Psoas muscle (tissue), 8 donors: ENCODE measurements at regions of chr10 and their contacts with region 1.

Region 1: DNA sequence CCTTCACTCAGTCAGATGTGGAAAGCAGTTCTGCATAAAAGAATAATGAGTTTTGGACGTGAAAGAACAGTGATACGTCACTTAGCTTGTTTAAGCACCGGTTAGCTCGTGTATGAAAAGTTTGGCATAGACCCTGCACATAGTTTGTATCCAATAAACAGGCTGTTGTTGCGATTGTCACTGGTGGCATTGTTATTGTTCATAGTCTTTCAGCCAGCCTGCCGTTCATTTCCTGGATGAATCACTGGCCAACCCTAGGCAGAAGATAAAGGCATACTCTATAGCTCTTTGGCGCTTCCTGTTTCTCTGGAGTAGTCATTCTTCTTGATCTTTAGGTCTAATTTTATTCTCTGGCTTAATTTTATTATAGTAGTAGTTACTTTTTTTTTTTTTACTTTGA is 57.8 kb upstream of the ANKRD30A start:
- DNase-seq: no peak
- ATAC-seq: no peak
- H3K4me3 ChIP-seq: no peak overlapping the region
- H3K27ac ChIP-seq: no peak overlapping the region
- H3K4me1 ChIP-seq: no peaks in the 10 kb centered on the region
- H3K27me3 ChIP-seq: no peaks in the 10 kb centered on the region
- CTCF ChIP-seq: no peak

Region 2: DNA sequence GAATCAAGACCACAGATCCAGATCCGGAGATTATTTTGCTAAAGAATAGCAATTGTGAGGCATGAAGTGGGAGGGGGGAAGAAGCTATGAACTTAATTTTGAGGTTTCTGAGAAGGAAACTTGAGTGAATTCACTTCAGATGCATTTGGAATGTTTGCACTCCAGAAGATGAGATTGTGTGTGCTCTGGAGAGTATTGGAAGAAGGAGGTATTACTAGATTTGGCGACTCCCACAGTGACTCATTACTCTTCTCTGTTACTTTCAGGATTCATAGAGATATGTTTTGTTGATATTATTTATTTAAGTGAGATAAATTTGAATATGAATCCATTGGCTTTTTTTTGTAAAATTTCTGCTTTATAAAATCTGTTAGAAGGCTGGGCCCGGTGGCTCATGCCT is 138.6 kb after region 1 on chr10:
- intact Hi-C with region 1: no loop called
- DNase-seq: no peak
- ATAC-seq: no peak
- H3K4me3 ChIP-seq: no peak overlapping the region
- H3K27ac ChIP-seq: no peak overlapping the region
- H3K4me1 ChIP-seq: no peaks in the 10 kb centered on the region
- H3K27me3 ChIP-seq: no peaks in the 10 kb centered on the region
- CTCF ChIP-seq: no peak

Region 3: DNA sequence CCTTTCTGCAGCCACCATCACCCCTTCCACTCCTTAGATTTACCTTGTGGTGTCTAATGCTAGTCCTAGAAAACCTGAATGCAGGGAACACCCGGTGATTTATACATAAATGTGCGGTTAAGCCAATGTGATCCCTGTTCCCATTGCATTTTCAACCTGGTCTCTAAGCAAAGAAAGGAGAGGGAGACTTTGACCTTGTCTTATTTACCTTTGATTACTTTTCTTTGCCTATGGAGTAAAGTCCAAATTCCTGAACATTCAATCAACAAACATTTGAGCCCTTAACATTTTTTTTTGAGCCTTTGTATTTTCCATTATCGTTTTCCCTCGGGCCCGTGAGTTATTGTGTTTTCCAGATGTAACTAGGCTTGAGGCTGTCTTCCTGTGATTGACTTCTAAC is 555.9 kb after region 1 on chr10:
- intact Hi-C with region 1: no loop called
- DNase-seq: no peak
- ATAC-seq: no peak
- H3K4me3 ChIP-seq: no peak overlapping the region
- H3K27ac ChIP-seq: no peak overlapping the region
- H3K4me1 ChIP-seq: no peaks in the 10 kb centered on the region
- H3K27me3 ChIP-seq: no peaks in the 10 kb centered on the region
- CTCF ChIP-seq: no peak

Region 4: DNA sequence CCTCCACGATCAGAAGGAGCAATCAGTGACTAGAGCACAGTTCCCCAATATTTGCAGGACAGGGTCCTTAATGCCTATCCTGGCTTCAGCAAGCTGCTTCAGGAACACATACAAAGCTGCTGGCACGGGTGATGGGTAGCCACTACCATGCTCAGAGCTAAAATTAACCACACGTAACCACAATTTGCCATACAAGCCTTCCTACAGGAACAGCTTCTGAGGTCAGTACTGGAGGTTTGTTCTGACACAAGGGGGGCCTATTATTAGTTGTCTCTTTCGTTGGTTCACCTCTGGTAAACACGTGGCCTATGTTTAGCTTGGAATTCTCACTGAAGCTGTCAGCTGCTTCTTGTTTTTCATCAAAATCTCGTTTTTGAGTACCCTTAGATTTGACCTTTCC is 748.7 kb after region 1 on chr10:
- intact Hi-C with region 1: loop called in 1 of 2 experiments (anchors 10 kb)
- DNase-seq: no peak
- ATAC-seq: no peak
- H3K4me3 ChIP-seq: no peak overlapping the region
- H3K27ac ChIP-seq: no peak overlapping the region
- H3K4me1 ChIP-seq: no peaks in the 10 kb centered on the region
- H3K27me3 ChIP-seq: no peaks in the 10 kb centered on the region
- CTCF ChIP-seq: no peak